RWPE1 (cell line): ENCODE measurements at regions of chr11 and their contacts with region 1.

Region 1: GRCh38 chr11:57324886-57325734 is at the start of gene TNKS1BP1:
- DNase-seq: peak; percentile 97
- H3K27ac ChIP-seq: peak within 1 kb of the TSS; percentile 99
- CTCF ChIP-seq: no peak

Region 2: GRCh38 chr11:57311109-57311936 is 13.8 kb before region 1 on chr11:
- CTCF ChIA-PET with region 1: interaction called, 5 read pairs
- POLR2A ChIA-PET with region 1: interaction called, 10 read pairs
- DNase-seq: peak; percentile 98
- H3K27ac ChIP-seq: peak overlapping the region; percentile 97
- CTCF ChIP-seq: no peak

Region 3: DNA sequence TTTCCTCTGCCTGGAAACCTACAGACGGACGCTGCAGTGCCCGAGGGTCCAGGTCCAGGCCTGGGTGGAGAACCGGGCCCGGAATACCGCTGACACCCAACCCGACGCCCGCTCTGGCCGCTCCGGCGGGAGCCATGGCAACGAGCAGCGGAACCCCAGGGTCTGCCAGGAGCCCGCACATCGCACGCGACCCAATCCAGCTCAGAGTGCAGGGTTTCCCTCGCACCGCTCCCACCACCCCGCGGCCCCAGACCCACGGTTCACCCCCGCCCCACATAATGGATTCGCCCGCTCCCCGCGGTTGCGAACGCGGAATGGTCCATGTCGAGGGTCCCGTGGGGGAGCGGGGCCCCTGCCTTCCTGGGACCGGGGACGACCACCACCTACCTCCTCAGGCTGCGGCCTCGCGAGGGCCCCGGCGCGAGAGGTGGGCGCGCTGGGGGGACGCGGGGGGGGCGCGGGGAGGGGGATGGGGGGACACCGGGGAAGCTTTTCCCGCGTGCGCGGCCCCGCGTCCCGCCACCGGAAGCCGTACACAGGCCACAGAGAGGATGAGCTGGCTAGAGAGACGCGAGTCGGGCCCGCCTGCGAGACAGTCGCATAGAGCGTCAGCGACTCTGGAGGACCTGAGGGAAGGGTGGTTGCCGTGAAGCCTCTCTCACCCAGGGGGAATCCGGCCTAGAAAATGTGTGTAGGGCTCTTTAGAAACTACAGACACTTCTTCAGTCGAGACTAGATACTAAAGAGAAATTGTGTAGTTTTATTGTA is 10.4 kb after region 1 on chr11 and contains the start of gene SSRP1:
- CTCF ChIA-PET with region 1: no interaction called
- POLR2A ChIA-PET with region 1: interaction called, 11 read pairs
- DNase-seq: peak; percentile 87
- H3K27ac ChIP-seq: peak within 1 kb of the TSS; percentile 85
- CTCF ChIP-seq: no peak